ENCODE measurements at regions of chr11 and their contacts with region 1.

Region 1: GRCh38 chr11:4493480-4493818 is 11.0 kb downstream of the OR52K1 start:
- DNase-seq: no peak
- H3K4me3 ChIP-seq: no peak overlapping the region
- H3K27ac ChIP-seq: no peak overlapping the region
- H3K4me1 ChIP-seq: peaks cover 8% of the 10 kb centered on the region
- H3K27me3 ChIP-seq: no peaks in the 10 kb centered on the region
- CTCF ChIP-seq: peak in 1 of 3 donors; percentile 17
- EP300 ChIP-seq: no peak
- POLR2A ChIP-seq: no peak

Region 2: DNA sequence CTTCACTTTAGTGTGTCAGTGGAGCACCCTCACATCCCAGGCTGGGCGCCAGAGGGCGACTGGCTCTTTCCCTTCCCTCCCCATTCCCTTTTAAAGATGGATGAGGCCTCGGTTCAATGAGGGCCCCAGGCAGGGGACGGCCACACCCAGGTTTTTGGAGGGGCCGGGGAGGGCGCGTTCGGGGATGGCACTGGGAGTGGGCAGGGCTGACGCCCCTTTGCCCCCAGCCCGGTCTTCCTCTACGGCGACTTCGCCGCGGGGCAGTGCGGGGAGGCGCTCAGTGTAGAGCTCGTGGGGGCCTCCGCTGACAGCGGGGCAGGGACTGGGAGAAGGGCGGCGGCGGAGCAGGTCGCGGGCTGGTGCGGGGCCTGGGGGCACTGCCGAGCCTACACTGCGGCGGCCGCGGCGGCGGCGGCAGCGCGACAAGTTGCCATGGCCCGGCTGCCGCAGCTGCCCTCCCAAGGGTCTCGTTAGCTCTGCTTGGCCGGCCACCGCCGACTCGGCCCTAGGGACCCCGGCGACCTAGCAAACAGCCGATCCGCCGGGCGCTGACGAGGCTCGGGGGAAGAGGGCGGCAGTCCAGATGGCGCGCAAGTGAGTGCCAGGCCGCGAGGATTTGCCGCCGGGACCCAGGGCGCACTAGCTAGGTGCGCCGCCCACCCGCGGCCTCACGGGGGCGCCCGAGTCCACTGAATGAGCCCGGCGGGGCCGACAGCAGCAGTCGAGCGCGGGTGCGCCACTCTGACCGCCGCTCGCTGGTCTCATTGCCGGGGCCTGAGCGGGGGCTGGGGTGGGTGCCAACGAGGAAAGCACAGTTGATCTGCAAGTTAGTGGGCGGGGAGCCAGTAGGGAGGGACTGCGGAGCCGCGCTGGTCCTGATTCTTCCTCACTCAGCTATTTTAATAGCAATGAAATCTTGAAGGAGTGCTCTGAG is 306.1 kb before region 1 on chr11:
- intact Hi-C with region 1: loop called in 2 of 4 experiments (anchors 1 to 5 kb)
- DNase-seq: peak; percentile 98 to 99 (median 99)
- H3K4me3 ChIP-seq: peak overlapping the region; percentile 52
- H3K27ac ChIP-seq: peak overlapping the region; percentile 61 to 78
- H3K4me1 ChIP-seq: peaks cover 3% of the 10 kb centered on the region
- H3K27me3 ChIP-seq: no peaks in the 10 kb centered on the region
- CTCF ChIP-seq: peak; percentile 92 to 95 (median 94)
- EP300 ChIP-seq: no peak
- POLR2A ChIP-seq: no peak

Region 3: DNA sequence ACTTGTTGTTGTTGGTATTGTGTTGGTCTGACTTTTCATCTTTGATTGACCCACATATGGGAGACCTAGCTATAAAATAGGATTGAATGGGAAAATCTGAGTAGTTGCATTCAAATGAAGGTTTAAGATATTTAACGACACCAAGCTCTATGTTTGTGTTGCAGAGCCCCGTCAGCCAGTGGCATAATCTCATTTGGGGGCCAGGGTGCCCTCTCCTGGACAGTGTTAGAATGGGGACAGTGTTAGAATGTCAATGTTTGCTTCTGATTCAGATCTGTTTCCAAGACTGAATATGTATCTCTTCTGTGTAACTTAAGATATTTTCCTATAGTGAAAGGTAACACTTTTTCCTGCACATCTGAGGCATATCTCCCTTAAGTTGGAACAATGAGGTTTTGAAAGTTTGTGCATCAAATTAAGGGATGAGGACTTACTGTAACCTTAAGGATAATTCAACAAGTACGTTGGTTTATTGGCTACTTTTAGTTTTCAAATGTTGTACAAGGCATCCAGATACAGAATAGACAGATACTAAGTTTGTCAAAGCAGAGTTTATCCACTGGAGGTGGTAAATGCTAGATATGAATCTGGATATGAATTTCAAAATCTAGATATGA is 46.3 kb after region 1 on chr11:
- intact Hi-C with region 1: loop called in 1 of 4 experiments (anchors 5 kb)
- DNase-seq: peak; percentile 53 to 79 (median 74)
- H3K4me3 ChIP-seq: no peak overlapping the region
- H3K27ac ChIP-seq: no peak overlapping the region
- H3K4me1 ChIP-seq: no peaks in the 10 kb centered on the region
- H3K27me3 ChIP-seq: no peaks in the 10 kb centered on the region
- CTCF ChIP-seq: peak; percentile 32 to 53 (median 50)
- EP300 ChIP-seq: no peak
- POLR2A ChIP-seq: no peak

Region 4: GRCh38 chr11:4589017-4589416 is 95.6 kb after region 1 on chr11:
- intact Hi-C with region 1: no loop called
- DNase-seq: no peak
- H3K4me3 ChIP-seq: no peak overlapping the region
- H3K27ac ChIP-seq: no peak overlapping the region
- H3K4me1 ChIP-seq: no peaks in the 10 kb centered on the region
- H3K27me3 ChIP-seq: no peaks in the 10 kb centered on the region
- CTCF ChIP-seq: no peak
- EP300 ChIP-seq: no peak
- POLR2A ChIP-seq: no peak